ENCODE measurements at regions of chr2 and their contacts with region 1.

Region 1: GRCh38 chr2:16201848-16202247 is 261.5 kb downstream of the MYCN start:
- DNase-seq: no peak
- ATAC-seq: no peak
- H3K4me3 ChIP-seq: no peak overlapping the region
- H3K27ac ChIP-seq: no peak overlapping the region
- H3K4me1 ChIP-seq: no peaks in the 10 kb centered on the region
- H3K27me3 ChIP-seq: no peaks in the 10 kb centered on the region
- CTCF ChIP-seq: no peak

Region 2: GRCh38 chr2:15449556-15450236 is 752.2 kb before region 1 on chr2:
- intact Hi-C with region 1: loop called in 1 of 10 experiments (anchors 5 kb)
- DNase-seq: no peak
- ATAC-seq: peak; percentile 64 to 97 (median 92)
- H3K4me3 ChIP-seq: no peak overlapping the region
- H3K27ac ChIP-seq: peak overlapping the region; percentile 42 to 80 (median 59)
- H3K4me1 ChIP-seq: peaks cover 0 to 26% (median 7%) of the 10 kb centered on the region in 9 donors
- H3K27me3 ChIP-seq: no peaks in the 10 kb centered on the region
- CTCF ChIP-seq: peak in 1 of 9 donors; percentile 5

Region 3: GRCh38 chr2:15763106-15763821 is 438.6 kb before region 1 on chr2:
- intact Hi-C with region 1: loop called in 1 of 10 experiments (anchors 5 kb)
- DNase-seq: no peak
- ATAC-seq: no peak
- H3K4me3 ChIP-seq: no peak overlapping the region
- H3K27ac ChIP-seq: no peak overlapping the region
- H3K4me1 ChIP-seq: peaks cover 0 to 6% (median 0%) of the 10 kb centered on the region in 9 donors
- H3K27me3 ChIP-seq: no peaks in the 10 kb centered on the region
- CTCF ChIP-seq: no peak

Region 4: GRCh38 chr2:15955295-15956166 is 246.3 kb before region 1 on chr2:
- intact Hi-C with region 1: loop called in 1 of 10 experiments (anchors 10 kb)
- DNase-seq: no peak
- ATAC-seq: no peak
- H3K4me3 ChIP-seq: no peak overlapping the region
- H3K27ac ChIP-seq: no peak overlapping the region
- H3K4me1 ChIP-seq: no peaks in the 10 kb centered on the region
- H3K27me3 ChIP-seq: peaks cover 0 to 6% (median 0%) of the 10 kb centered on the region in 7 donors
- CTCF ChIP-seq: no peak

Measured in heart right ventricle (tissue), 16 donors.